ENCODE measurements at regions of chr1 and their contacts with region 1.

Region 1: GRCh38 chr1:8858888-8859706 is 19.4 kb downstream of the ENO1 start:
- DNase-seq: no peak
- H3K4me3 ChIP-seq: no peak overlapping the region
- H3K27ac ChIP-seq: peak overlapping the region; percentile 56 to 64
- H3K4me1 ChIP-seq: peaks cover 6 to 25% of the 10 kb centered on the region in 2 donors
- H3K27me3 ChIP-seq: no peaks in the 10 kb centered on the region
- CTCF ChIP-seq: peak; percentile 67 to 69 (median 68)

Region 2: GRCh38 chr1:8878448-8879347 is 19.6 kb after region 1 on chr1 and contains the start of gene ENO1:
- intact Hi-C with region 1: no loop called
- DNase-seq: peak; percentile 91 to 99
- H3K4me3 ChIP-seq: peak within 1 kb of the TSS; percentile 72 to 87
- H3K27ac ChIP-seq: peak within 1 kb of the TSS; percentile 96 to 99
- H3K4me1 ChIP-seq: peaks cover 15 to 39% of the 10 kb centered on the region in 2 donors
- H3K27me3 ChIP-seq: no peaks in the 10 kb centered on the region
- CTCF ChIP-seq: no peak
- total RNA-seq, gene ENO1: 637 TPM

Region 3: GRCh38 chr1:8889925-8890785 is 31.1 kb after region 1 on chr1:
- intact Hi-C with region 1: loop called (anchors 1 kb)
- DNase-seq: peak; percentile 39 to 91
- H3K4me3 ChIP-seq: peak overlapping the region; percentile 16 to 30
- H3K27ac ChIP-seq: peak overlapping the region; percentile 77 to 79
- H3K4me1 ChIP-seq: peaks cover 0 to 14% of the 10 kb centered on the region in 2 donors
- H3K27me3 ChIP-seq: no peaks in the 10 kb centered on the region
- CTCF ChIP-seq: no peak

Region 4: DNA sequence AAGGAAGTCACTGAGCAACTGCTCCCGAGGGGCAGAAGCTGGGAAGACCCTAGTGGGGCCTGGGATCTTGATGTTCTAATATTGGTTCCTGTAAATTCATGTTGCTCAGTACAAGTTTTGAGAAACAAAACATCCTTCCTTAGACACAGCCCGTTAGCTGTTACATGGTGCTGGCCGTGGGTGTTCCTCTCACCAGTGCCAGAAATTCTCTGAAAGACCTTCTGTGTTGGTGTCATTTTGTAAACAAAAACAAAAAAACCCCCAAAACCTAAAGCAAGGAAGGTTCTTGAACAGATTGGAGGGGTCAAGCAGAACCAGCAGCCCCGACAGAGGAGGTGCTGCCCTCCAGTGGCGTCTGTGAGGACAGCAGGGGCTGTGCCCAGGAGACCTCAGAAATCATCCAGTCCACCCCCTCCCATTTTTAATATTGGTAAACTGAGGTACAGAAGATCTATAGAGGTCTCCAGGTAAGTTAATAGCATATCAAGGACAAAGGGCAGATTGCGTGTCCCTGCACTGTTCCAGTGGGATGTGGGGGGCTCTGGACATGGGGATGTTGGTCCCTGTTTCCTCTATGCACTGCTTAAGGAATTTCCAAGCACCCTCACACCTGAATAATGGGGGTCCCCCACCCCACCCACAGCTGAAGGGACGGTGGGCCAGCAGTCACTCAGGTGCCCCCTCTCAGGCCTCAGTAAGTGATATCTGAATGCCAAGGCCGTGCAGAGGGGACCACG is 129.0 kb after region 1 on chr1:
- intact Hi-C with region 1: loop called (anchors 2 kb)
- DNase-seq: no peak
- H3K4me3 ChIP-seq: no peak overlapping the region
- H3K27ac ChIP-seq: peak overlapping the region in 1 of 2 donors; percentile 6
- H3K4me1 ChIP-seq: peaks cover 0 to 10% of the 10 kb centered on the region in 2 donors
- H3K27me3 ChIP-seq: no peaks in the 10 kb centered on the region
- CTCF ChIP-seq: peak; percentile 86 to 95 (median 88)

Region 5: DNA sequence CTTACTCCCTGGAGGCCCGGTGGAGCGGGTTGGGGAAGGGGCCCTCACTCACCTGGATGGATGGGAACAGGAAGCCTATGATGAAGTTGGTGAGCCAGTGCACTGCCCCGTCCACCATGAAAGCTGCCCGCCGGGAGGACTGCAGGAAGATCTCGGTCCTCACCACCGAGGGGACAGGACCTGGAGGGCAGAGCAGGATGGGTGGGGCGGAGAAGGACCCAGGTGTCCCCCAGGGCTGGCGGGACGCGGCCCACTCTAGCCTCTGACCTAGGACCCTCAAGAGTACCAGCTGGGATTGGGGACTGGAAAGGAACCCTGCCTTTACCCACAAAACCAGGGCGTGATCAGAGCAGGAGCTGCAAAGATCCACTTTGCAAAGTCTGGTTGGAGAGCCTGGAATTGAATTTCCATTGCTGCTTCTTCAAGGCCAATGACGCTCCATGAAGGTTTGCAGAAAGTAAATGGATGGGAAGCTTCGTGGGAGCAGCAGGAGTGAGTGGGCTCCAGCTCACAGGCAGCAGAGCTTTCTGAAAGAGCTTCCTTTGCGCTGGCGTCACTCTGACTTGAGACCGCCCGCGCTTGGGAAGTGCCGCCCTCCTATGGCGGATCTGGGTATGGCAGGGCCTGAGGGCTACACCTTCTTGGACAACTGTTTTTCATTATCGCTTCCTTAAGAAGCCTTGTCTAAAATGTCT is 145.8 kb after region 1 on chr1:
- intact Hi-C with region 1: loop called (anchors 5 kb)
- DNase-seq: peak in 1 of 2 donors; percentile 84
- H3K4me3 ChIP-seq: no peak overlapping the region
- H3K27ac ChIP-seq: no peak overlapping the region
- H3K4me1 ChIP-seq: peaks cover 0 to 6% of the 10 kb centered on the region in 2 donors
- H3K27me3 ChIP-seq: no peaks in the 10 kb centered on the region
- CTCF ChIP-seq: peak; percentile 78 to 97 (median 95)